ENCODE measurements at regions of chr18 and their contacts with region 1.

Region 1: GRCh38 chr18:23503038-23503962 is at the start of gene RMC1:
- DNase-seq: peak; percentile 97 to 99
- ATAC-seq: peak; percentile 98 to 99 (median 99)
- H3K4me3 ChIP-seq: peak within 1 kb of the TSS; percentile 85 to 99 (median 96)
- H3K27ac ChIP-seq: peak within 1 kb of the TSS; percentile 57 to 96 (median 94)
- H3K4me1 ChIP-seq: peaks cover 0 to 44% (median 28%) of the 10 kb centered on the region in 9 donors
- H3K27me3 ChIP-seq: no peaks in the 10 kb centered on the region
- CTCF ChIP-seq: peak in 4 of 9 donors; percentile 10 to 33 (median 26)
- total RNA-seq, gene RMC1: 12.4 to 21.6 (median 14.5) TPM

Region 2: DNA sequence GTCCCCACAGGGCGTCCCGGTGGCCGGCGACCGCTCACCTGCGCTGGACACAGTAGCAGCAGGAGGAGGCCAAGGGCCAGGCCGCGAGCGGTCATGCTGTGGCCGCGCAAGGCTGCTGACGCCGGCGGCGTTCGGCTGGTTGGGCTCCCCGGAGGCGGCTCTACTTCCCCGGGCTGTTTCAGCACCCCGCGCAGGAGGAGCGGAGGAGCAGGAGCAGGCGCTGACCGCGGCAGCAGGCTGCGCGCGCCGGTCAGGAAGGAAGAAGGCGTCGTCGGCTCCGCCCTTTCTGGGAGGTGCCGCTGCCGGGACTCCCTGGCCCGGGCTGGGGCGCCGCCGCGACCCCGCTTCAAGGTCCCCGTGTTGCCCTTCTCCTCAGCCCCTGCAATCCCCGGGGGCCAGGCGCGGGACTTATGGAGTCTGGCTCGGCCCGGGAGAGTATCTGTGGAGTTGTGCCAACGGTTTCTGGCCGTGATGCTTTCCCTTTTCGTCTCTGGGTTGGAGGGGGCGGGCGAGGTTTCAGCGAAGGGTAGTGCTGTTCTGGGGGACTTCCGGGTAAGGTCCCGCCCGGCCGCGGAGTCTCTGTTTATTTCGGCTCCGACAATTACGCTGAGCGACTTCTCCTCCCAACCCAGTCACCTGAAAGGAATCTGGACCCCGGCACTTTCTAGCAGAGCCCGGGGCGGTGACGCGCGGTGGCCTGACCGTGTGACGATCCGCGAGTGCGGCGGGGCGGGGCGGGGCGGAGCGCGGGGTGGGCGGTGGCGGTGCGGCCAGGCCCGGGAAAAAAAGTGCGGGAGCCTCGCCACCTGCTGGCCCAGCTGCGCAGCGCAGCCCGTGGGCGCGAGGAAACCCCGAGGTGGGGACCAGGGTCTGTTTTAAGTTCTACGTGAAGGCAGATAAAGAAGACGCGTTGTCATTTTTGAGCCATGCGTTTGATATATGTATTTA is 83.2 kb after region 1 on chr18 and contains the start of gene NPC1:
- intact Hi-C with region 1: loop called in 5 of 10 experiments (anchors 1 to 5 kb)
- DNase-seq: peak; percentile 92 to 95
- ATAC-seq: peak; percentile 98 to 99 (median 99)
- H3K4me3 ChIP-seq: peak within 1 kb of the TSS; percentile 77 to 97 (median 91)
- H3K27ac ChIP-seq: peak within 1 kb of the TSS; percentile 94 to 100 (median 98)
- H3K4me1 ChIP-seq: peaks cover 0 to 46% (median 24%) of the 10 kb centered on the region in 9 donors
- H3K27me3 ChIP-seq: peaks cover 0 to 12% (median 0%) of the 10 kb centered on the region in 7 donors
- CTCF ChIP-seq: peak; percentile 90 to 100 (median 97)
- total RNA-seq, gene NPC1: 9.7 to 21.2 (median 13.3) TPM